Right lobe of liver (tissue), 6 donors: ENCODE measurements at regions of chrX and their contacts with region 1.

Region 1: DNA sequence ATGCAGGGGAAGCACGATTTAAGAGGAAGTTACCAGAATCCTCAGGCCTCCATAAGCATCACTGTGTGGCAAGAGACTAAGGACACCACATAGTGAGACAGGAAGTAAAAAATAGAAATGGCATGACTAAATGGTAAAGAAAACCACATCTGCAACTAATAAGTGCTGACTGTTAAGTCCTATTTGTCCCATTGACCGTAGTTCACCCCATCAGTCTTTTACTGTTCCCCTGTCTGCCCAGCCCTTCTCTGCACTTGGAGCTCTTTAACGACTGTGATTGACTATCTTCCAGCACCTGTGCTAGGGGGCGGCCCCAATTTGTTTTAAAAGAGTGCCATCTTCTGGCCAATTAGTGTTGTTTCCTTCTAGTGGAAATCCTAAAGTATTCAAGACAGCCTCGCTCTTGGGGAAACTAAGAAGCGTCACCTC is 94.2 kb downstream of the MAOA start:
- DNase-seq: peak in 2 of 3 donors; percentile 34 to 50
- ATAC-seq: peak; percentile 87 to 92 (median 88)
- H3K4me3 ChIP-seq: no peak overlapping the region
- H3K27ac ChIP-seq: no peak overlapping the region
- H3K4me1 ChIP-seq: peaks cover 0 to 10% (median 0%) of the 10 kb centered on the region in 4 donors
- H3K27me3 ChIP-seq: no peaks in the 10 kb centered on the region
- CTCF ChIP-seq: peak; percentile 61 to 74 (median 70)
- POLR2A ChIP-seq: no peak

Region 2: GRCh38 chrX:43357741-43358140 is 392.5 kb before region 1 on chrX:
- intact Hi-C with region 1: loop called in 1 of 2 experiments (anchors 10 kb)
- DNase-seq: no peak
- ATAC-seq: no peak
- H3K4me3 ChIP-seq: no peak overlapping the region
- H3K27ac ChIP-seq: no peak overlapping the region
- H3K4me1 ChIP-seq: no peaks in the 10 kb centered on the region
- H3K27me3 ChIP-seq: no peaks in the 10 kb centered on the region
- CTCF ChIP-seq: no peak
- POLR2A ChIP-seq: no peak

Region 3: GRCh38 chrX:43557792-43558191 is 192.5 kb before region 1 on chrX:
- intact Hi-C with region 1: loop called (anchors 10 kb)
- DNase-seq: peak in 2 of 3 donors; percentile 29 to 47
- ATAC-seq: peak; percentile 73 to 78 (median 77)
- H3K4me3 ChIP-seq: no peak overlapping the region
- H3K27ac ChIP-seq: no peak overlapping the region
- H3K4me1 ChIP-seq: no peaks in the 10 kb centered on the region
- H3K27me3 ChIP-seq: no peaks in the 10 kb centered on the region
- CTCF ChIP-seq: peak; percentile 68 to 78 (median 75)
- POLR2A ChIP-seq: no peak

Region 4: GRCh38 chrX:43693602-43694406 is 56.5 kb before region 1 on chrX:
- intact Hi-C with region 1: no loop called
- DNase-seq: peak in 2 of 3 donors; percentile 56 to 61
- ATAC-seq: peak; percentile 73 to 84 (median 74)
- H3K4me3 ChIP-seq: no peak overlapping the region
- H3K27ac ChIP-seq: peak overlapping the region in 2 of 3 donors; percentile 45 to 71
- H3K4me1 ChIP-seq: peaks cover 0 to 38% (median 4%) of the 10 kb centered on the region in 4 donors
- H3K27me3 ChIP-seq: no peaks in the 10 kb centered on the region
- CTCF ChIP-seq: no peak
- POLR2A ChIP-seq: no peak

Region 5: DNA sequence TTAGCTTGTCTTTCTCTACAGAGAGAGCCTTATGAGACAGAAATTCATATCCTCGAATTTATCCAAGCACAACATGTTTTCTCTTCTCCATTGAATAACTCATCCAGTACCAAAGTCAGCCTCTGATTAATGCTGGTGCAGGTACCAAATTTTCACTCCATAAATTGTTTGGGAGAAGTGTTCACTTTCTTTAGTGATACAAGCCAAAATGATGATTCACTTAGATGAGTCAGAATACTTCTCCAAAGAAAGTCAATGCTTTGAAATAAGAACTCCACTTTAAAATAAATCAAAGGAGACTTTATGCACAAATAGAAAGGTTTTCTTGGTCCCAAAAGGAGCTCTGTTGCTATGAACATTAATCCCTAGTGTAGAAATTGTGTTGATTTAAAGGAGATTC is 71.8 kb after region 1 on chrX:
- intact Hi-C with region 1: no loop called
- DNase-seq: no peak
- ATAC-seq: no peak
- H3K4me3 ChIP-seq: no peak overlapping the region
- H3K27ac ChIP-seq: no peak overlapping the region
- H3K4me1 ChIP-seq: no peaks in the 10 kb centered on the region
- H3K27me3 ChIP-seq: no peaks in the 10 kb centered on the region
- CTCF ChIP-seq: no peak
- POLR2A ChIP-seq: no peak